Prostate gland (tissue), 2 donors: ENCODE measurements at regions of chr11 and their contacts with region 1.

Region 1: DNA sequence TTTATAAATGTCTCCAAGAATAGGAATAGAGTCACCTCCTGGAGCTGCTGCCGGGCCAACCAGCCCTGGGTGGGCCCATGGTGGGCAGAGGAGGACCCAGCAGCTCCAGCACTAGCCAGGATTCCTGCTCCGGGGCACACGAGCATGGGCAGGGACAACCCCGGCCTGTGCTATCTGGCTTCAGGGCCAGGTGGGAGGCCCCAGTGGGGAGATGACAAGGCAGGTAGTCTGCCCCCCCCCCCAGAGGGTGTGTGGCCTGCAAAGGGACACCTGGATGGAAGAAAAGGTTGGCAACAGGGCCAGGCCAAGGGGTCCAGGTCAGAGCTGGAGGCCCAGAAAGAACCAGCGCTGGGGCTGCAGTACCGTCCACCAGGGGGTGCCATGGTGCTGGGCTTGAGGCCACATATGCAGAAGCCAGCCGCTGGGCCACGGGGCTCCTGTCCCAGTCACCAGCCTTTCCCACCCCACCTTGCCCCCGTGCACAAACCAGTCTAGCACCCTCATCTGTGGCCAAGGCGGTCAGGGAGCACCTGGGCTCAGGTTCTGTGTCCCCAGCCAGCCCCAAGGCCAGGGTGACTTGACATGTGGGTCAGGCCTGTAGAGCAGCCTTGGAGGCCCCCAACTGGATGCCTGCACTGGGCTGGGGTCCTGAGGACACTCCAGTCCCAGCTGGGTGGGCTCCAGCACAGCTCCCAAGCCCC is 3.5 kb downstream of the TSPAN32 start:
- DNase-seq: peak; percentile 74
- H3K4me3 ChIP-seq: no peak overlapping the region
- H3K27ac ChIP-seq: peak overlapping the region in 1 of 2 donors; percentile 19
- H3K4me1 ChIP-seq: no peaks in the 10 kb centered on the region
- H3K27me3 ChIP-seq: no peaks in the 10 kb centered on the region
- CTCF ChIP-seq: peak; percentile 86 to 98 (median 92)
- POLR2A ChIP-seq: no peak

Region 2: DNA sequence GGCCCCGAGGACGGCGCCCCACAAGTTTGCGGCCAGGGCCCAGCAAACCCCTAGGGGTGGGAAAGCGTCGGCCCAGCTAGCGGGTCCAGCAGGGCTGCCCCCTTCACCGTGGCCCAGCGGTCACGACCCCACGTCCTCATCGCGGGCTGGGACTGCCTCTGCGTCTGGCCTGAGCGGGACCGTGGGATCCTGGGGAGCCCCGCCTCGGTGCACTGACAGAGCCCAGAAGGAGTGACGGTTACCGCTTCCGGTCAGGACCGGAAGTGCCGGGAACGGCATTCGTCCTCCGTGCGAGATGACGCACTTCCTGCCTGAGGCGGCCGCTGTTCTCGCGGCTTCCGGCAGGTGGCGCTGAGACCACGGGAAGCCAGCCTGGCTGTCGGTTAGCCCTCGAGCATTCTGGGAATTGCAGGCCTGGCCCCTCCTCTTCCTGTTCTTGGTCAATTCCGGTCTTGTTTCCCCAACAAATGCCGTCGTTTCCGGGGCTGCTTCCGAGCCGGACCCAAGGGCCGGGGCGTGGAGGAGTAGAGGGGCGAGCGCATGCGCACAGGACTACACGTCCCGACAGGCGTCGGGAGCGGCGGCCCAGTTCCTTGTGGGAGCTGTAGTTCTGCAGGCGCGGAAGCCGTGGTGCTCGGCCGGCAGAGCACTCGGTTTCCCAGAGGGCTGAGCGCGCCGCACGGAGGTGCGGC is 94.9 kb after region 1 on chr11 and contains the start of gene TSSC4:
- intact Hi-C with region 1: loop called (anchors 5 kb)
- DNase-seq: peak; percentile 100
- H3K4me3 ChIP-seq: peak within 1 kb of the TSS; percentile 93 to 94
- H3K27ac ChIP-seq: peak within 1 kb of the TSS; percentile 95 to 97
- H3K4me1 ChIP-seq: peaks cover 19% of the 10 kb centered on the region
- H3K27me3 ChIP-seq: no peaks in the 10 kb centered on the region
- CTCF ChIP-seq: peak; percentile 100
- POLR2A ChIP-seq: peak; percentile 65
- total RNA-seq, gene TSSC4: 40.4 to 71.1 TPM

Region 3: DNA sequence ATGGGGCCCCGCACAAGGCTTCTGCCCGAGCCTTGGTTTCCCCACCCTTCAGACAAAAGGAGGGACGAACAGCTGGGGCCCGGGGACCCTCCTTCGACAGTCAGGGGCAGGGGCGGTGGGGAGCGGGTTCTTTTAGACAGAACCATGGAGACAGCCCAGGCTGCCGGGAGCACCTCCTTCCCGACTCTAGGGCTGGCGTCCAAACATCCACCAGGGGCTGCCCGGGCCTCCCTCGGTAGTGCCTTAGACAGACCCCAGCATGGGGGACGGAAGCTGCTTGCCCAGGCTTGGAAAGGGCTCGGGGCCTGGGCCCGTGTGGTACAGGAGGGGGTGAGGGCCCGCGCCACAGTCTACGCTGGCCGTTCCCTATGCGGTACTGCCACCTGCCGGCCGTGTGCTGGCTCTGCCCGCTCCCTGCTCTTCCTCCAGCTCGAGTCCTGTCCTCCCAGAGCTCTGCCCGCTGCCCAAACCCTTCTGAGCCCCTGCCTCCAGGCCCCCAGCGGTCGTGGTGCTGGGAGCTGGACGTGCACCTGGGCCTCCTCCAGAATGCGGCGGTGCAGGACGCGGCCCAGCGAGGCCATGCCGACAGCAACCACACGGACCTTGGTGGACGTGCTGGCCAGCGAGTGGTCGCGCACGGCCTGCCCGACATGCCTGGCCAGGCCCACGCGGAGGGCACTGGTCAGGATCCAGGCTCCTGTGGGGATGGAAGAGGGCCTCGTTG is 115.4 kb after region 1 on chr11:
- intact Hi-C with region 1: loop called (anchors 1 kb)
- DNase-seq: peak; percentile 47
- H3K4me3 ChIP-seq: no peak overlapping the region
- H3K27ac ChIP-seq: no peak overlapping the region
- H3K4me1 ChIP-seq: no peaks in the 10 kb centered on the region
- H3K27me3 ChIP-seq: no peaks in the 10 kb centered on the region
- CTCF ChIP-seq: peak; percentile 80 to 97 (median 91)
- POLR2A ChIP-seq: peak; percentile 11